Breast epithelium (tissue), 4 donors: ENCODE measurements at regions of chrX and their contacts with region 1.

Region 1: DNA sequence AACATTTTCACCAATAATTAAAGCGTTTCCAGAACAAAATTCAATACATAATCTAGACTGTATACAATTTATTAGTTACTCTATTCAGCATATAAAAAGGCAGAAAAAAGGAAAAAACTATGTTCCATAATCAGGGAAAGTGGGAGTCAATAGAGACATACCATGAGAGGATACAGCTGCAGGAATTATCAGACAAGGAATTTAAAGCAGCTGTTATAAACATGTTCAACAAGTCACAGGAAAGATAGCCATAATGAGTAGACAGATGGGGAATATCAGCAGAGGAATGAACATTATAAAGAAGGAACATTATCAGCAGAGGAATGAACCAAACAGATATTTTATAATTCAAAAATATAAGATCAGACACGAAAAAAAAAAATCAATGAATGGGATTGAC is 500.6 kb upstream of the RPS6KA3 start:
- DNase-seq: no peak
- H3K4me3 ChIP-seq: no peak overlapping the region
- H3K27ac ChIP-seq: no peak overlapping the region
- H3K4me1 ChIP-seq: no peaks in the 10 kb centered on the region
- H3K27me3 ChIP-seq: no peaks in the 10 kb centered on the region
- CTCF ChIP-seq: no peak
- POLR2A ChIP-seq: no peak

Region 2: GRCh38 chrX:20495575-20495974 is 271.8 kb before region 1 on chrX:
- intact Hi-C with region 1: no loop called
- DNase-seq: no peak
- H3K4me3 ChIP-seq: no peak overlapping the region
- H3K27ac ChIP-seq: no peak overlapping the region
- H3K4me1 ChIP-seq: no peaks in the 10 kb centered on the region
- H3K27me3 ChIP-seq: peaks cover 0 to 31% of the 10 kb centered on the region in 2 donors
- CTCF ChIP-seq: no peak
- POLR2A ChIP-seq: no peak

Region 3: GRCh38 chrX:21153503-21153902 is 386.2 kb after region 1 on chrX:
- intact Hi-C with region 1: no loop called
- DNase-seq: peak in 1 of 2 donors; percentile 18
- H3K4me3 ChIP-seq: no peak overlapping the region
- H3K27ac ChIP-seq: peak overlapping the region in 1 of 2 donors; percentile 34
- H3K4me1 ChIP-seq: no peaks in the 10 kb centered on the region
- H3K27me3 ChIP-seq: no peaks in the 10 kb centered on the region
- CTCF ChIP-seq: no peak
- POLR2A ChIP-seq: no peak

Region 4: GRCh38 chrX:21683941-21684340 is 916.6 kb after region 1 on chrX:
- intact Hi-C with region 1: loop called (anchors 5 kb)
- DNase-seq: no peak
- H3K4me3 ChIP-seq: no peak overlapping the region
- H3K27ac ChIP-seq: no peak overlapping the region
- H3K4me1 ChIP-seq: no peaks in the 10 kb centered on the region
- H3K27me3 ChIP-seq: peaks cover 0 to 15% of the 10 kb centered on the region in 2 donors
- CTCF ChIP-seq: no peak
- POLR2A ChIP-seq: no peak